Activated T-helper 1 cell treated with anti-CD3 and anti-CD28 coated beads, Interleukin-12 subunit alpha, Interleukin-12 subunit beta, Interleukin-2, Interleukin-4 antibody, amounts not matched to agents 30 ng/mL and 10 ng/mL and 1 ng/mL, durations not matched to agents 14 hours and 24 hours and 36 hours (primary cell): ENCODE measurements at regions of chr3 and their contacts with region 1.

Region 1: GRCh38 chr3:123328851-123329635 is 119.8 kb downstream of the ADCY5 start:
- DNase-seq: peak; percentile 50
- H3K4me3 Mint-ChIP-seq: no peak overlapping the region
- H3K27ac Mint-ChIP-seq: no peak overlapping the region
- H3K4me1 Mint-ChIP-seq: no peaks in the 10 kb centered on the region
- H3K27me3 Mint-ChIP-seq: peaks cover 2% of the 10 kb centered on the region

Region 2: GRCh38 chr3:123489400-123490004 is 160.5 kb after region 1 on chr3:
- intact Hi-C with region 1: loop called (anchors 1 kb)
- DNase-seq: peak; percentile 15
- H3K4me3 Mint-ChIP-seq: no peak overlapping the region
- H3K27ac Mint-ChIP-seq: no peak overlapping the region
- H3K4me1 Mint-ChIP-seq: no peaks in the 10 kb centered on the region
- H3K27me3 Mint-ChIP-seq: peaks cover 2% of the 10 kb centered on the region